ENCODE measurements at regions of chr11 and their contacts with region 1.

Region 1: DNA sequence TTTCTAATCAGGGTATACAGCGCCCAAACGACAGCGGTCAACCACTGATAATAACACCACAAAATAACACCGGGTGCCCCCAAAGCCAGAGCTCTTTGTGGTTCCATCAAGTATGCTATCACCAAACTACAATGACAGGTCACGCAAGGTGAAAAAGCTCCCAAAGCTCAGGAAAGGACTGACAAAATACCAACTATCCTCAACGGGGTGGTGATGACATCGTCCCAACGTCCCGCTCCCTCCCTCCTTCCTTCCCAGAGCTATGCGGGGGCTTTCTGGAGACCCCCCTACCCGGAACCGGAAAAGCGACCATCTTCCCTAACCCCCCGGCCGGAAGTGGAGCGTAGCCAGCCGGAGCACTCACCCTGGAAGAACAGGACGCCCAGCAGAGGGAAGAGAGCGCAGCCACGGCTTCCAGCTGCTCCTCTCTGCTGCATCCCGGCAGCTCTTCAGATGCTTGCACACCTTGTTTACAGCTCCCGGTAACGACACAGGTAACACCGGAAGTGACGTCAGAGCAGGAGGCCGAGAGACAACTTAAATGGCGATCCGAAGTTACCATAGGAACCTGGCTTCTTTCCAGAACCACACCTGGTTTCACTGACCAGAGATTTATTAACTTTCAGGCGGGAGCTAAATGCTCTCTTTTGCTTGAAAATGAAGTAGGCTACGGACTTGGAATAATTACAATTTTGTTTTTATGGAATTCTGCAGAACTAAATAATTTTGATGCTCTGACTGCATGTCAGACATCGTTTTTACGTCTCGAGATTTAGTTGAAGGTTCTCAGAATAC is at the start of gene MPZL3:
- DNase-seq: peak; percentile 45 to 72 (median 62)
- H3K4me3 ChIP-seq: peak within 1 kb of the TSS; percentile 84 to 99 (median 98)
- H3K4me3 Mint-ChIP-seq: peak within 1 kb of the TSS; percentile 97 to 100
- H3K27ac ChIP-seq: peak within 1 kb of the TSS; percentile 94 to 99
- H3K27ac Mint-ChIP-seq: peak within 1 kb of the TSS; percentile 95 to 98 (median 98)
- H3K4me1 ChIP-seq: peaks cover 16 to 42% of the 10 kb centered on the region in 2 donors
- H3K4me1 Mint-ChIP-seq: peaks cover 25% of the 10 kb centered on the region
- H3K27me3 ChIP-seq: no peaks in the 10 kb centered on the region
- H3K27me3 Mint-ChIP-seq: peaks cover 0 to 4% (median 0%) of the 10 kb centered on the region in 3 donors
- CTCF ChIP-seq: no peak
- polyA plus RNA-seq, gene MPZL3: 4.2 to 8.5 (median 8.0) TPM

Region 2: GRCh38 chr11:118290923-118291322 is 38.9 kb after region 1 on chr11:
- intact Hi-C with region 1: loop called in 1 of 2 experiments (anchors 5 kb)
- DNase-seq: peak; percentile 52 to 71 (median 63)
- H3K4me3 ChIP-seq: peak overlapping the region; percentile 4 to 70 (median 48)
- H3K4me3 Mint-ChIP-seq: peak overlapping the region; percentile 0 to 80
- H3K27ac ChIP-seq: peak overlapping the region; percentile 1 to 90
- H3K27ac Mint-ChIP-seq: peak overlapping the region; percentile 86 to 95 (median 93)
- H3K4me1 ChIP-seq: peaks cover 14 to 20% of the 10 kb centered on the region in 2 donors
- H3K4me1 Mint-ChIP-seq: peaks cover 24% of the 10 kb centered on the region
- H3K27me3 ChIP-seq: no peaks in the 10 kb centered on the region
- H3K27me3 Mint-ChIP-seq: peaks cover 0 to 2% (median 2%) of the 10 kb centered on the region in 3 donors
- CTCF ChIP-seq: peak; percentile 60

Region 3: GRCh38 chr11:119284344-119285157 is 1032.5 kb after region 1 on chr11:
- intact Hi-C with region 1: no loop called
- DNase-seq: no peak
- H3K4me3 ChIP-seq: no peak overlapping the region
- H3K4me3 Mint-ChIP-seq: no peak overlapping the region
- H3K27ac ChIP-seq: peak overlapping the region in 1 of 2 donors; percentile 11
- H3K27ac Mint-ChIP-seq: peak overlapping the region in 3 of 7 donors; percentile 8 to 72 (median 33)
- H3K4me1 ChIP-seq: no peaks in the 10 kb centered on the region
- H3K4me1 Mint-ChIP-seq: no peaks in the 10 kb centered on the region
- H3K27me3 ChIP-seq: no peaks in the 10 kb centered on the region
- H3K27me3 Mint-ChIP-seq: no peaks in the 10 kb centered on the region
- CTCF ChIP-seq: peak; percentile 38

Measured in CD14-positive monocyte (primary cell).